ENCODE measurements at regions of chr17 and their contacts with region 1.

Region 1: DNA sequence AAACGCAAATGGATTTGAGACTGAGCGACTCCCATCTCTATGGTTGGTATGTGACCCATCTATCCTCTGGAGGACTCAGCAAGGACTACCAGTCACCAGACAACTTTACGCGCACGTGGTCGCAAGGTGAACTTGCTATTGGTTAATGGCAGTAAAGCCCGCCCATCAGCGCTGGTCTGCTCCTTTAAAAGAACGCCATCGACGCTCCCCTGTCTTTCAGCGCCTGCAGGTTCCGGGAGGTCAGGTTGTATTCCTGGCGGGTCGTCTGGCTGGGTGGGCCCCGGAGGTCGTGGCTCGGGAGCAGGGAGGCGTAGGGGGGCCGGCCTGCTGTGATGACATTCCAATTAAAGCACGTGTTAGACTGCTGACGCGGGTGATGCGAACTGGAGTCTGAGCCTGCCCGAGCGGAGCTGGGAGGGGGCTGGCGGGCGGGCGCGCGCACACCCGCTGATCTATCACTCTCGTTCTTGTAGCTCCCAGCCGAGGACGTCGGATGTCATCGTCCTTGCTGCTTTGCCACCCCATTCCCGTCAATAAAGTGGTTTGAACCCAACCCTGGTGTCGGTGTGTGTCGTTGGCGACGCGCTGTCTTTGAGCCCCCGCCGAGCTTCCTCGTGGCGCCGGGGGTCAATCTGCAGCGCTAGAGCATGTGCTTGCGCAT is 15.9 kb upstream of the ERN1 start:
- H3K4me3 Mint-ChIP-seq: no peak overlapping the region
- H3K27ac Mint-ChIP-seq: no peak overlapping the region
- H3K4me1 Mint-ChIP-seq: peaks cover 32% of the 10 kb centered on the region
- H3K27me3 Mint-ChIP-seq: no peaks in the 10 kb centered on the region

Region 2: GRCh38 chr17:64063766-64064224 is 82.1 kb before region 1 on chr17:
- intact Hi-C with region 1: no loop called
- H3K4me3 Mint-ChIP-seq: no peak overlapping the region
- H3K27ac Mint-ChIP-seq: peak overlapping the region; percentile 64
- H3K4me1 Mint-ChIP-seq: peaks cover 80% of the 10 kb centered on the region
- H3K27me3 Mint-ChIP-seq: no peaks in the 10 kb centered on the region

Region 3: GRCh38 chr17:64262417-64263260 is 116.8 kb after region 1 on chr17 and contains the start of gene TEX2:
- intact Hi-C with region 1: loop called (anchors 5 kb)
- H3K4me3 Mint-ChIP-seq: peak within 1 kb of the TSS; percentile 96
- H3K27ac Mint-ChIP-seq: peak within 1 kb of the TSS; percentile 87
- H3K4me1 Mint-ChIP-seq: peaks cover 40% of the 10 kb centered on the region
- H3K27me3 Mint-ChIP-seq: no peaks in the 10 kb centered on the region

Region 4: DNA sequence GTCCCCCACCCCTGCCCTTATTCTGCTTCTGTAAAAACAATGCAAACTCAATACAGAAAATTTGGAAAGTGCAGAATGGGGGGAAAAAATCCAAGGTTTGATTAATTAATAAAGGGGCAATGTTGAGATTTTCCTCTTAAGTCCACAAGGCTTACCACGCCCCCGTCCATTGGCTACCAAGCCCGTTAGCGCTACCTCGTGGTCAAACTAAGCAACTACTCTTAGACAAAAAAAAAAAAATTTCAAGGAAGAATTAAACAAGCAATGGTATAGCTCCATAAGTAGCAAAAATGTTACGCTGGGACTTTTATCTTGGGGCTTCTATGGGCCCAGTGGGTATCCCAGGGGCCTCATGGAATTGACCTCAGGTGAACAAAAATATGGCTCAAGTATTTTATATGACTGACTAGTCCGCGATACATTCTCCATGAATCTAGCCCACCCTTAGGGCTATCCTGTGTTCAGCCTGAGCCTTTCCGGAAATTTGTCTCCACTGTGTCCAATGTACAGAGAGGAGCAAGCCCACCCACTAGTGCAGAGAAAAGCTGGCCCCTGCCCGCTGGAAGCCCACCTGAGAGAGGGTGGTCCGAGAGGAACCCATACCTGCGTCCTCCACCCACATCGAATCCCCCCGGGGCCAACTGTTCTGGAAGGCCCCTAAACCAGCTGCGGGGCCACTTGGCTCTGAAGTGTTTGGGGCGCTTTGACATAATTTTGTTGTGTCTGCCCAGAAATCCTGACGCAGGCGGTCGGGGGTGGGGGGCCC is 136.3 kb after region 1 on chr17:
- intact Hi-C with region 1: loop called (anchors 2 kb)
- H3K4me3 Mint-ChIP-seq: no peak overlapping the region
- H3K27ac Mint-ChIP-seq: no peak overlapping the region
- H3K4me1 Mint-ChIP-seq: peaks cover 34% of the 10 kb centered on the region
- H3K27me3 Mint-ChIP-seq: no peaks in the 10 kb centered on the region

Measured in dendritic cell treated with granulocyte-macrophage colony-stimulating factor and Interleukin-4, amounts not matched to agents 40 ng/mL and 50 ng/mL, for 4 days (primary cell).